ENCODE measurements at regions of chr4 and their contacts with region 1.

Region 1: GRCh38 chr4:84971319-84971932 is 4.9 kb upstream of the WDFY3 start:
- DNase-seq: no peak
- ATAC-seq: no peak
- H3K4me3 Mint-ChIP-seq: no peak overlapping the region
- H3K27ac Mint-ChIP-seq: no peak overlapping the region
- H3K4me1 Mint-ChIP-seq: peaks cover 5% of the 10 kb centered on the region
- H3K27me3 Mint-ChIP-seq: peaks cover 17% of the 10 kb centered on the region
- CTCF ChIP-seq: peak; percentile 68

Region 2: GRCh38 chr4:84578540-84579402 is 392.7 kb before region 1 on chr4:
- CTCF ChIA-PET with region 1: interaction called, 5 read pairs
- POLR2A ChIA-PET with region 1: no interaction called
- intact Hi-C with region 1: loop called (anchors 5 kb)
- DNase-seq: peak; percentile 37
- ATAC-seq: no peak
- H3K4me3 Mint-ChIP-seq: no peak overlapping the region
- H3K27ac Mint-ChIP-seq: no peak overlapping the region
- H3K4me1 Mint-ChIP-seq: peaks cover 14% of the 10 kb centered on the region
- H3K27me3 Mint-ChIP-seq: peaks cover 20% of the 10 kb centered on the region
- CTCF ChIP-seq: peak; percentile 54

Region 3: GRCh38 chr4:84750253-84750959 is 221.0 kb before region 1 on chr4:
- CTCF ChIA-PET with region 1: interaction called, 17 read pairs
- POLR2A ChIA-PET with region 1: no interaction called
- intact Hi-C with region 1: loop called (anchors 2 kb)
- DNase-seq: no peak
- ATAC-seq: no peak
- H3K4me3 Mint-ChIP-seq: no peak overlapping the region
- H3K27ac Mint-ChIP-seq: no peak overlapping the region
- H3K4me1 Mint-ChIP-seq: no peaks in the 10 kb centered on the region
- H3K27me3 Mint-ChIP-seq: no peaks in the 10 kb centered on the region
- CTCF ChIP-seq: peak; percentile 70

Region 4: DNA sequence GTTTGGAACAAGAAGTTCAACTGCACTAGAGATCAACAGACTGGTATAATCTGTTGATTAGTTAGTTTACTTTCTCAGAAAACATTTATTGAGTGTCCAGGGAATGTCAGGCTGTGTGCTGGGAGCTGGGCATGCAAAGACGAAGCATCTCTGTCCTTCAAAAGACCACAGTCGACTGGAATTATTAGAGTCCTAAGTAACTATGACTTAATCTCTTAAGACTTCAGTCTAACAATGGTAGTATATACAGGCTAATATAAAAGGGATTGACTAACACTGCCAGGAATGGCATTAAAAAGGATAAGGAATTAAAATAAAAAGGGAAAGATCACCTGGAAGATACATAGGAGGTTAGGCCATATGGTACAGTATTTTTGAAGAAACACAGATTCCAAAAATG is 133.7 kb before region 1 on chr4:
- CTCF ChIA-PET with region 1: no interaction called
- POLR2A ChIA-PET with region 1: no interaction called
- intact Hi-C with region 1: no loop called
- DNase-seq: no peak
- ATAC-seq: no peak
- H3K4me3 Mint-ChIP-seq: no peak overlapping the region
- H3K27ac Mint-ChIP-seq: no peak overlapping the region
- H3K4me1 Mint-ChIP-seq: no peaks in the 10 kb centered on the region
- H3K27me3 Mint-ChIP-seq: no peaks in the 10 kb centered on the region
- CTCF ChIP-seq: no peak

Region 5: GRCh38 chr4:84878090-84878489 is 93.3 kb before region 1 on chr4:
- CTCF ChIA-PET with region 1: no interaction called
- POLR2A ChIA-PET with region 1: no interaction called
- intact Hi-C with region 1: no loop called
- DNase-seq: no peak
- ATAC-seq: no peak
- H3K4me3 Mint-ChIP-seq: no peak overlapping the region
- H3K27ac Mint-ChIP-seq: no peak overlapping the region
- H3K4me1 Mint-ChIP-seq: no peaks in the 10 kb centered on the region
- H3K27me3 Mint-ChIP-seq: no peaks in the 10 kb centered on the region
- CTCF ChIP-seq: no peak

Region 6: DNA sequence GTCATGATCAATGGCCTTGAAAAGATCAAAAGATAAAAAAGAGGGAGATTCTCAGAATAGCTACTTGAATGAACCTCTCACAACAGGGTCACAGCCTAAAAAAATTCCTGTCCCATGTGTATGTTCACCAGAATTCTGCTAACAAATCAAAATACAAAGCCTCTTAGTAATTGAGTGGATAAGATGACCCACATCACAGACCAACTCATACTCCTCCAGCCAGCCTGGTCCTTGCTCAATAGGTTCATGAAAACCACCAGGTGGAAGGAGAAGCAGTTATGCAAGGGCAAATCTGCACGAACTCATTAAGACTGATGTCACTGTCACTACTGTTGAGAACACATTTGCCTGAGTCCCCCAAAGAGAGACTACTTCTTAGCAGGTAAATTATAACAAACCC is 26.5 kb before region 1 on chr4:
- CTCF ChIA-PET with region 1: no interaction called
- POLR2A ChIA-PET with region 1: no interaction called
- intact Hi-C with region 1: no loop called
- DNase-seq: no peak
- ATAC-seq: no peak
- H3K4me3 Mint-ChIP-seq: no peak overlapping the region
- H3K27ac Mint-ChIP-seq: no peak overlapping the region
- H3K4me1 Mint-ChIP-seq: no peaks in the 10 kb centered on the region
- H3K27me3 Mint-ChIP-seq: peaks cover 3% of the 10 kb centered on the region
- CTCF ChIP-seq: no peak

Measured in activated CD8-positive, alpha-beta T cell treated with anti-CD3 and anti-CD28 coated beads for 36 hours (primary cell).